CD8-positive, alpha-beta T cell (primary cell): ENCODE measurements at regions of chr14 and their contacts with region 1.

Region 1: DNA sequence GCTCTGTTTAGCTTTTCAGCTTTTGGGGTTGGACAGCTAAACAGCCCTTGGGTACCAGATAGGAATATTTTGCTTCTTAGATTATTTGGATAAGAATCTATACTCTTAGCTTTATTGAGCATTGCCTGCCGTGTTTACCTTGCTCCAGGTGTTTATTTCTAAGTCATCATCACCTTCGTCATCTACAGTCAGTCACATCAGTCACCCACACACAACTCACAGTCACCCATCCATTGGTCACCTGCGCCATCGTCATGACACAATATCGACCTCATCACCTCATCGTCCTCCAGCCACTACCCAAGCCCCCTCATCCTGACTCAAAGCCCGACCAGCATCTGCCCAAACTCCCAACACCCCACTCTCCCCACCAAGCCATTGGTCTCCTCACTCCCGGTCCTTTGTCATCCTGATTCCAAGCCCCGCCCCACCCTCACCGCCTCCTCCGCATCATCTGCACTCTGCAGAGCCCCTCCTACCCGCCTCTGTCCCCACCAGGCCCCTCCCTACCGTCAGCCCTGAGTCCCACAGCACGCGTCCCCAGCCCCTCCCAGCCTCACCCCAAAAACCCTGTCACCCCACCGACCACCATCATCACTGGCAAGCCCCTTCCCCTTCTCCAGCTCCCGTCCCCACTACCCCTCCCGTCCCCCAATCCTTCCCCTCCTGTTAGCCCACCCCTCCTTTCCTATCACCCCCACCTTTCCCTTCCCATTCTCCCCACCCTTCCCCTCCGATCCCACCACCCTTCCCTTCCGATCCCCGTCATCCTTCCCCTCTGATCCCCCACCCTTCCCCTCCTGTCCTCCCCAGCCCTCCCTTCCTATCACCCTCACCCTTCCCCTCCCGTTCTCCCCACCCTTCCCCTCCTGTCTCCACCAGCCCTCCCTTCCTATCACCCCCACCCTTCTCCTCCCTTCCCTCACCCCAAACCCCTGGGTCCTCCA is 9.8 kb downstream of the DLK1 start:
- DNase-seq: no peak
- ATAC-seq: no peak
- H3K4me3 ChIP-seq: no peak overlapping the region
- H3K4me3 Mint-ChIP-seq: no peak overlapping the region
- H3K27ac ChIP-seq: no peak overlapping the region
- H3K27ac Mint-ChIP-seq: no peak overlapping the region
- H3K4me1 ChIP-seq: no peaks in the 10 kb centered on the region
- H3K4me1 Mint-ChIP-seq: no peaks in the 10 kb centered on the region
- H3K27me3 ChIP-seq: no peaks in the 10 kb centered on the region
- H3K27me3 Mint-ChIP-seq: peaks cover 6% of the 10 kb centered on the region
- CTCF ChIP-seq: no peak

Region 2: DNA sequence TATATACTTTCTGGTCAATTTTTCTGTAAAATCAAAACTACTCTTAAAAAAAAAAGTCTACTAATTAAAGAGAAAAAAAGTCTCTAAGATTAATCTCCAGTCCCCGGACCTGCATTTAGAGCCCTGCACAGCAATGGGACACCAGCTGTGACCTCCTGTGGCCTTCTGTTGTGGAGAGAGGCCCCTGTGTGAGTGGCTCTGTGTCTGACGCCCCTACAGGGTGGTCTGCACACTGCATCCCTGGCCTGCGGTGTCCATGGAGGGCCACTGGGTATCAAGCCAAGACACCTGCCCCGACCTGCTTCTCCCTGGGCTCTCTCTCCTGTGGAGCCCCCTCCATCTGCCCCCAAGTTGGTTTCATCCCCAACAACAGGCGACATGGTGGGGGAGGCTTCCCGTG is 576.8 kb after region 1 on chr14:
- CTCF ChIA-PET with region 1: no interaction called
- POLR2A ChIA-PET with region 1: no interaction called
- intact Hi-C with region 1: loop called in 1 of 2 experiments (anchors 5 kb)
- DNase-seq: no peak
- ATAC-seq: no peak
- H3K4me3 ChIP-seq: no peak overlapping the region
- H3K4me3 Mint-ChIP-seq: no peak overlapping the region
- H3K27ac ChIP-seq: no peak overlapping the region
- H3K27ac Mint-ChIP-seq: no peak overlapping the region
- H3K4me1 ChIP-seq: no peaks in the 10 kb centered on the region
- H3K4me1 Mint-ChIP-seq: no peaks in the 10 kb centered on the region
- H3K27me3 ChIP-seq: peaks cover 0 to 2% of the 10 kb centered on the region in 2 experiments
- H3K27me3 Mint-ChIP-seq: peaks cover 21% of the 10 kb centered on the region
- CTCF ChIP-seq: no peak

Region 3: GRCh38 chr14:101595887-101596721 is 859.6 kb after region 1 on chr14:
- CTCF ChIA-PET with region 1: no interaction called
- POLR2A ChIA-PET with region 1: no interaction called
- intact Hi-C with region 1: no loop called
- DNase-seq: peak in 7 of 9 experiments; percentile 14 to 67 (median 46)
- ATAC-seq: peak; percentile 53
- H3K4me3 ChIP-seq: peak overlapping the region in 1 of 2 experiments; percentile 10
- H3K4me3 Mint-ChIP-seq: peak overlapping the region; percentile 58
- H3K27ac ChIP-seq: peak overlapping the region; percentile 28 to 52
- H3K27ac Mint-ChIP-seq: peak overlapping the region; percentile 90
- H3K4me1 ChIP-seq: peaks cover 34% of the 10 kb centered on the region
- H3K4me1 Mint-ChIP-seq: peaks cover 57% of the 10 kb centered on the region
- H3K27me3 ChIP-seq: no peaks in the 10 kb centered on the region
- H3K27me3 Mint-ChIP-seq: no peaks in the 10 kb centered on the region
- CTCF ChIP-seq: no peak